AG04450 (cell line): ENCODE measurements at regions of chr1 and their contacts with region 1.

Region 1: DNA sequence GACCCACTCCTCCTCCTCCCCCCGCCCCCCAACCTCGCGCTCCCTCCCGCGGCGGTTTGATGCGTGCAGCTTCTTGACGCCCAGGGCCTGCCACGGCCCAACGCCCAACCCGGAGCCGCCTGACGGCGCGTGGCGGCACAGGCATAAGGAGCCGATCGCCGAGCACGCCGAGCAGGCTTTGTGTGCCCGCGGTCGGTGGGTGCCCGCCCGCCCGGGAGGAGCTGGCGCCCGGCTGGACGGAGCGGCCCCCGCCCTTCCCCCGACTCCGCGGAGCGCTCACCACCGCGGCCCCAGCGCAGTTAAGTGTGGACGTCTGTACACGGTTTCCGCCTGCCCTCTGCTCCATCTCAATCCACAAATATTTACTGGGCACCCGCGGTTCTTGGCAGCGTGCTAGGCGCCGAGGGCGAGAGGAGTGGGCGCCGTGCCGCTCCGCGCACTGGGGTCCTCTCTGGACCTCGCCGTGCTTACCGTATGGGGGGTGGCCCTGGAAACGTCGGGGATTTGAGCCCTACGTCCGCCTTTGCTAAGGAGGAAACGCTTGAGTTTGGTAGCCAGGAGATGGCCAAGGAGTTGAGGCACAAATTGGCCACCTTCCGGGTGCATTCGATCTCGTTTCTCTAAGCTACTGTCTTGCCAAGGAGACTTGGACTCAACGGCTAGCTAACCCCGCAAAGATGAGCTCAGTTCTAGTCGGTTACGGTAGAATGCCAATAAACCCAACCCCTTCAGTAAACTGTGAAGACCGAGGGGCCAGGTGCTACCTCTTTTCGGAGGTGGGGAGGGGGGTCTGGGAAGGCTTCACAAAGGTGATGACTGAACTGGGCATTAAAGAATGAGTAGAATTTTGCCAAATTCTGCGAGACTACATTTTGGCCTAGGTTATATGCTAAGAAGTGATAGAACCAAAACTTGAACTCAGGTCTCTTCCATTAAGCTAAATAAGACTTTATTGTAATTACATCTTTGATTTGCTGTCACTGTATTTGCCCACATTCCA is 583 bp upstream of the HDGF start:
- DNase-seq: peak; percentile 91
- H3K4me3 ChIP-seq: peak overlapping the region; percentile 94
- H3K27ac ChIP-seq: peak overlapping the region; percentile 77
- H3K27me3 ChIP-seq: no peaks in the 10 kb centered on the region
- CTCF ChIP-seq: no peak

Region 2: GRCh38 chr1:156740679-156741612 is 11.1 kb before region 1 on chr1 and contains the start of gene MRPL24:
- CTCF ChIA-PET with region 1: no interaction called
- POLR2A ChIA-PET with region 1: interaction called, 26 read pairs
- DNase-seq: peak; percentile 98
- H3K4me3 ChIP-seq: peak within 1 kb of the TSS; percentile 94
- H3K27ac ChIP-seq: peak within 1 kb of the TSS; percentile 75
- H3K27me3 ChIP-seq: no peaks in the 10 kb centered on the region
- CTCF ChIP-seq: no peak
- polyA plus RNA-seq, gene MRPL24: 65.5 and 80.4 TPM in 2 replicates

Region 3: DNA sequence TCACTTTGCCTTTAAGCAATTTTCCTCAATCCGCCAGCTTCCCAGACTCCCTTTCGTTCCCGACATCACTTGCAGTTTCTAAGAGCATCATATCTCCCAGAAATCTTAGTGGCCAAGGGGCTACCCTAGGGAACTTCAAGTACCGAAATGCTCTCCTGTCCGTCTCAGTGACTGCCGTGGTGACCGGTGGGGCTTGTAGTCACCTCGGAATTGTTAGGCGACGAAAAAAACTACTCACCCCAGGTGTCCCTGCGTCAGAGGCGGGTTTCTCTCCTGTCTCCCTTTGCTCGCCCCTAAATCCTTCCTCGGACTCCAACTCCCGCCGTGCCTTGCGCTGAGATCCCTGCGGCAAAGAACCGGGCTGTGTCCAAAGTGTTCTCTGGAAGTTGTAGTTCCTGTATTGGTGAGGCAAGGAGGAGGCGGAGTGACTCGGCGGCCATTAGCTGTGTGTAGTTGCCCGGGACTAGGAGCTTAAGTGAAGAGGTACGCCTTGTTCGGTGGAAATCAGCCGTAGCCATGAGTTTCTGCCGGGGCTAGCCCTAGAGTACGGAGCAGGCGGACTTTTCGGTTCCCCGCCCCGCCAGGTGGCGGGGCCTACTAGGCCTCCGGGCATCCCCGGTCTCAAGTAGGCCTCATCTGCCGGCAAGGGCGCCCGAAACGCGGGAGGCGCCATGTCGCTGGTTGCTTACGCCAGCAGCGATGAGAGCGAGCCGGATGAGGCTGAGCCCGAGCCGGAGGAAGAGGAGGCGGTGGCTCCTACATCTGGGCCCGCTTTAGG is 15.2 kb after region 1 on chr1 and contains the start of gene PRCC:
- CTCF ChIA-PET with region 1: interaction called, 4 read pairs
- POLR2A ChIA-PET with region 1: interaction called, 24 read pairs
- DNase-seq: peak; percentile 100
- H3K4me3 ChIP-seq: peak within 1 kb of the TSS; percentile 95
- H3K27ac ChIP-seq: peak within 1 kb of the TSS; percentile 77
- H3K27me3 ChIP-seq: no peaks in the 10 kb centered on the region
- CTCF ChIP-seq: no peak
- polyA plus RNA-seq, gene PRCC: 51.1 and 58.6 TPM in 2 replicates

Region 4: DNA sequence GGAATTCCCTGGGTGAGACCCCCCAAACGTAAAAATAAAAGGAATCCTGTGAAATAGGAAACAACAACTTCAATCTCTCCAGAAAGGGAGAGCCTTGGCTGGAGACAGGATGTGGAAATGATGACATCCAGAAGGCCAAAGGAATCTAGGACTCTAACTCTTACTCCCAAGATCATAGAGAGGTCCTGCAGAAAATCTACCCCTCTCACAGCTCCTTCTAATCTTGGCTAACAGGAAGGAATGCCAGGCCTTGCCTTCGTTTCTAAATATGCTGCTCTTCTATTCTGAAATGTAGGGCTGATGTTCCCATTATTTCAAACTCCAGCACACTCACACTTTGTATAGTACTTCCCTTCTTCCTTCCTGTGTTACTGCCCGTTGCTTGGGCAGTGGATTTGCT is 252.7 kb after region 1 on chr1:
- CTCF ChIA-PET with region 1: no interaction called
- POLR2A ChIA-PET with region 1: no interaction called
- DNase-seq: no peak
- H3K4me3 ChIP-seq: no peak overlapping the region
- H3K27ac ChIP-seq: no peak overlapping the region
- H3K27me3 ChIP-seq: no peaks in the 10 kb centered on the region
- CTCF ChIP-seq: no peak